CD14-positive monocyte (primary cell): ENCODE measurements at regions of chr16 and their contacts with region 1.

Region 1: GRCh38 chr16:27401768-27402568 is at the start of gene IL21R:
- DNase-seq: peak; percentile 74 to 90 (median 85)
- H3K4me3 ChIP-seq: peak within 1 kb of the TSS; percentile 2 to 62 (median 30)
- H3K4me3 Mint-ChIP-seq: peak within 1 kb of the TSS; percentile 71 to 95
- H3K27ac ChIP-seq: peak within 1 kb of the TSS; percentile 47 to 62
- H3K27ac Mint-ChIP-seq: peak within 1 kb of the TSS; percentile 80 to 91 (median 88)
- H3K4me1 ChIP-seq: peaks cover 59 to 67% of the 10 kb centered on the region in 2 donors
- H3K4me1 Mint-ChIP-seq: peaks cover 67% of the 10 kb centered on the region
- H3K27me3 ChIP-seq: no peaks in the 10 kb centered on the region
- H3K27me3 Mint-ChIP-seq: peaks cover 4 to 14% (median 14%) of the 10 kb centered on the region in 3 donors
- CTCF ChIP-seq: no peak
- polyA plus RNA-seq, gene IL21R: 1.0 to 1.7 (median 1.4) TPM

Region 2: GRCh38 chr16:27326738-27327585 is 75.0 kb before region 1 on chr16:
- intact Hi-C with region 1: loop called in 1 of 2 experiments (anchors 10 kb)
- DNase-seq: peak; percentile 89 to 97 (median 97)
- H3K4me3 ChIP-seq: peak overlapping the region in 1 of 3 experiments; percentile 61
- H3K4me3 Mint-ChIP-seq: peak overlapping the region; percentile 56 to 79
- H3K27ac ChIP-seq: peak overlapping the region; percentile 88 to 93
- H3K27ac Mint-ChIP-seq: peak overlapping the region; percentile 94 to 99 (median 97)
- H3K4me1 ChIP-seq: peaks cover 36 to 85% of the 10 kb centered on the region in 2 donors
- H3K4me1 Mint-ChIP-seq: peaks cover 79% of the 10 kb centered on the region
- H3K27me3 ChIP-seq: no peaks in the 10 kb centered on the region
- H3K27me3 Mint-ChIP-seq: peaks cover 0 to 3% (median 0%) of the 10 kb centered on the region in 3 donors
- CTCF ChIP-seq: no peak

Region 3: GRCh38 chr16:27414758-27415431 is 12.9 kb after region 1 on chr16:
- intact Hi-C with region 1: loop called in 1 of 2 experiments (anchors 2 kb)
- DNase-seq: peak in 2 of 3 donors; percentile 52 to 69
- H3K4me3 ChIP-seq: peak overlapping the region in 1 of 3 experiments; percentile 33
- H3K4me3 Mint-ChIP-seq: peak overlapping the region in 1 of 2 donors; percentile 27
- H3K27ac ChIP-seq: peak overlapping the region in 1 of 2 donors; percentile 7
- H3K27ac Mint-ChIP-seq: peak overlapping the region; percentile 54 to 85 (median 70)
- H3K4me1 ChIP-seq: peaks cover 21 to 52% of the 10 kb centered on the region in 2 donors
- H3K4me1 Mint-ChIP-seq: peaks cover 35% of the 10 kb centered on the region
- H3K27me3 ChIP-seq: no peaks in the 10 kb centered on the region
- H3K27me3 Mint-ChIP-seq: peaks cover 0 to 2% (median 0%) of the 10 kb centered on the region in 3 donors
- CTCF ChIP-seq: no peak

Region 4: DNA sequence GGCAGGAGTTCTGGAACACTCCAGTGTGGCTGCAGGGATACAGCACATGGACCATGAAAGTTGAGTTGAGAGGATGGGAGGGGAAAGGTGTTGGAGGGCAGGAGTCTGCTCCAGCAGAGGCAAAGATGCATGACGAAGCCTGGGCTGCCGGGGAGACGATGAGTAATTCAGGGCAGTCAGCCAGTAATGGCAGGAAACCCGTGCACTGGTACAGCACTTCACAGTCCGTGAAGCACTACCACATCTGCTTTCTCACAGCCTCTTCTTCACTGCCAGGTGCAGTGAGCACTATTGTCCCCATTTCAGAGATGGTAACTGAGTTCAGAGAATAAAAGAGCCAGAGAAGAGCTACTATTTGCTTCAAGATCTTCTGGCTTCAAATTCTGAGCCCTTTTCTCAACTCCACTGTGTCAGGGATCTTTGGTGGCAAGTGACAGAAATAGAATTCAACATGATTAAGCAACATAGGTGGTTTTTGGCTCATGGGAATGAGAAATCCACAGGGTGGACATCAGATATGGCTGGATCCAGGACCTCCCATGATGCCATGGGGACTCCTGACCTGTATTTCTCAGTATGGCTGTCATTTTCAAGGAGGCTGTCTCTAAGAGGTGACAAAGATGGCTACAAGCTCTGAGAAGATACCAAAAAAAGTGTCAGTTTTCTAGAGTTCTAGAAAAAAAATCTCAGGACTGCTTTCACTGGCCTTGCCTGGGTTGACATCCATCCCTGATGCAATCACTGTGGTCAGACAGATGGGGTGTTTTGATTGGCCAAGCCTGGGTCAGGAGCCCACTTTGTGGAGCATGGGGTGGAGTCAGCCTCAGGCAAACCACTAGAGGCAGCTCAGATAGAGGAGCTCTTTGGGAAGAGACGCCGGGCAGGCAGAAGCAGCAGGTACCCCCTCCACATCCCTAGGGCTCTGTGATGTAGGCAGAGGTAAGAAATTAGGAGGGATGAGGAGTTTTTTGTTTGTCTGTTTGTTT is 24.7 kb after region 1 on chr16:
- intact Hi-C with region 1: loop called in 1 of 2 experiments (anchors 2 kb)
- DNase-seq: peak; percentile 70 to 80 (median 71)
- H3K4me3 ChIP-seq: no peak overlapping the region
- H3K4me3 Mint-ChIP-seq: peak overlapping the region in 1 of 2 donors; percentile 57
- H3K27ac ChIP-seq: peak overlapping the region in 1 of 2 donors; percentile 37
- H3K27ac Mint-ChIP-seq: peak overlapping the region; percentile 3 to 66 (median 46)
- H3K4me1 ChIP-seq: peaks cover 23 to 30% of the 10 kb centered on the region in 2 donors
- H3K4me1 Mint-ChIP-seq: peaks cover 32% of the 10 kb centered on the region
- H3K27me3 ChIP-seq: peaks cover 0 to 3% of the 10 kb centered on the region in 2 donors
- H3K27me3 Mint-ChIP-seq: peaks cover 15 to 20% (median 17%) of the 10 kb centered on the region in 3 donors
- CTCF ChIP-seq: no peak